Caco-2 (cell line): ENCODE measurements at regions of chr7 and their contacts with region 1.

Region 1: GRCh38 chr7:127047521-127047920 is 205.2 kb downstream of the GRM8 start:
- DNase-seq: no peak
- H3K4me3 ChIP-seq: no peak overlapping the region
- H3K4me3 Mint-ChIP-seq: no peak overlapping the region
- H3K27ac Mint-ChIP-seq: no peak overlapping the region
- H3K4me1 ChIP-seq: no peaks in the 10 kb centered on the region
- H3K4me1 Mint-ChIP-seq: no peaks in the 10 kb centered on the region
- H3K27me3 ChIP-seq: no peaks in the 10 kb centered on the region
- H3K27me3 Mint-ChIP-seq: peaks cover 8% of the 10 kb centered on the region
- CTCF ChIP-seq: no peak

Region 2: DNA sequence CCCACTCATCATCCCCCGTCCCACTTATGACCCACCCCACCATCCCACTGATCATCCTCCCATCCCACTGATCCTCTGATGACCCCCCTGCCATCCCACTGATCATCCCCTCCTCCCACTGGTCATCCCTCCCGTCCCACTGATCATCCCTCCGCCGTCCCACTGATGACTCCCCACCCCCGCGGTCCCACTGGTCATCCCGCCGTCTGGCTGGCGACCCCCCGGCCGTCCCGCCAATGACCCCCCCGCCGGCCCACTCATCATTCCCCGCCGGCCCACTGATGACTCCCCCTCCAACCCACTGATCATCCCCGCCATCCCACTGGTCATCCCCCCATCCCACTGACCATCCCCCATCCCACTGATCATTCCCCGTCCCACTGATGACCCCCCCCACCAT is 44.1 kb after region 1 on chr7:
- CTCF ChIA-PET with region 1: no interaction called
- POLR2A ChIA-PET with region 1: no interaction called
- intact Hi-C with region 1: no loop called
- DNase-seq: no peak
- H3K4me3 ChIP-seq: no peak overlapping the region
- H3K4me3 Mint-ChIP-seq: no peak overlapping the region
- H3K27ac Mint-ChIP-seq: no peak overlapping the region
- H3K4me1 ChIP-seq: no peaks in the 10 kb centered on the region
- H3K4me1 Mint-ChIP-seq: no peaks in the 10 kb centered on the region
- H3K27me3 ChIP-seq: no peaks in the 10 kb centered on the region
- H3K27me3 Mint-ChIP-seq: peaks cover 7% of the 10 kb centered on the region
- CTCF ChIP-seq: no peak

Region 3: DNA sequence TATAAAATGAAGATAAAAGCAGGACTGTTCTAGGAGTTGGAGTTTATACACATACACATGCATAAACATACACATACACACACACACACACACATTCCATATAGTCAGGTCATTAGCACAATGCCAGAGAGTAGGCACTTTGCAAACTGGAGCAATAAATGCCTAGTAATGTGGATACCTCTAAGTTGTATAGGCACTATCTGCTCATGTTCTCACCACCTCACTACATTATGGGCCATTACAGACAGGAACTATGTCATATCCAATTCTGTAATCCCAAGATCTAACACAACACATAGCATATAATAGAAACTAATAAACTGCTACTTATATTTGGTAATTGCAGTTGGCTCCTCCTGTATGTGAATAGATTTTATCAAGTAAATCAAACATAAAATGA is 89.6 kb after region 1 on chr7:
- CTCF ChIA-PET with region 1: no interaction called
- POLR2A ChIA-PET with region 1: interaction called, 10 read pairs
- intact Hi-C with region 1: no loop called
- DNase-seq: no peak
- H3K4me3 ChIP-seq: no peak overlapping the region
- H3K4me3 Mint-ChIP-seq: no peak overlapping the region
- H3K27ac Mint-ChIP-seq: no peak overlapping the region
- H3K4me1 ChIP-seq: no peaks in the 10 kb centered on the region
- H3K4me1 Mint-ChIP-seq: no peaks in the 10 kb centered on the region
- H3K27me3 ChIP-seq: no peaks in the 10 kb centered on the region
- H3K27me3 Mint-ChIP-seq: peaks cover 7% of the 10 kb centered on the region
- CTCF ChIP-seq: no peak